ENCODE measurements at regions of chr17 and their contacts with region 1.

Region 1: DNA sequence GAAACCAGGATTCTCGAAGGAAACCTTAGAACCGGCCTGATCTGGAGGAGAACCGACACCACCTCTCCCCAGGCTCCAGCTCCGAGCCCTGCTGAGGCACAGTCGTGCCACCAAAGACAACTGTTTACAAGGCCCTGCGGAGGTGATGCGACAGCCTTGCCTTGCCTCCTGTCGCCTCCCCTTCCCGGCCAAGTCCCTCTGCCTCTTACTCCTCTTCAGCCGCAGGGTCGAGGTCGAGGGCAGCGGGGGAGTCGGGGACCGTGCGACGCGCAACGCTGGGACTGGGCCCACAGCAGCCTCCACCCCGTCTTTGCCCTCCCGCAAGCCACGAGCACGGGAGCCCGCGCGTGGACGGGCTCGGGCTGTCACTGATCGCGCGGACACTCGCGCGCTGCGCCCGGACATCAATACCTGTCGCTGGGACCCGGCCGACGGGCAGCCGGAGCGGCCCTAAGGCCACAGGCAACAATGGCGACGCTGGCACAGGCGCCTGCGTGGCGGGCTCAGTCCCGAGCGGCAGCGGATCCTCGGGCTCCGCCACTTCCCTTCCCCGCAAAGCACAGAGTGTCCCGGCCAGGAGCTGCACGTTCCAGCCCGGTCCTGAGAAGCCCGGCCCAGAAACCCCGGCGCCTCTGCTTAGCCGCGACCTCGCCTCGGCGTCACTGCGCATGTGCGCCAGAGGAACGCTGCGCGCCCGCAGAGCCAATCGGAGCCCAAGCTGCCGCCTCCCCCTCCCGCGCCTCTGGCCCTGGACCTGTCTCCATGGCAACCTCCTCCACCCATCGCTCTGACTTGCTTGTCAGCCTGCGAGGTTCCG is at the start of gene ZNF287:
- DNase-seq: peak; percentile 96
- ATAC-seq: peak; percentile 99
- H3K4me3 Mint-ChIP-seq: peak within 1 kb of the TSS; percentile 79
- H3K27ac Mint-ChIP-seq: no peak within 1 kb of the TSS
- H3K4me1 Mint-ChIP-seq: peaks cover 14% of the 10 kb centered on the region
- H3K27me3 Mint-ChIP-seq: peaks cover 3% of the 10 kb centered on the region
- total RNA-seq, gene ZNF287: 9.4 TPM

Region 2: GRCh38 chr17:16653209-16654041 is 84.7 kb after region 1 on chr17 and contains the start of gene ZNF624:
- CTCF ChIA-PET with region 1: no interaction called
- POLR2A ChIA-PET with region 1: no interaction called
- intact Hi-C with region 1: loop called in 1 of 2 experiments (anchors 1 kb)
- DNase-seq: peak; percentile 94
- ATAC-seq: peak; percentile 97
- H3K4me3 Mint-ChIP-seq: peak within 1 kb of the TSS; percentile 81
- H3K27ac Mint-ChIP-seq: peak within 1 kb of the TSS; percentile 73
- H3K4me1 Mint-ChIP-seq: peaks cover 18% of the 10 kb centered on the region
- H3K27me3 Mint-ChIP-seq: peaks cover 5% of the 10 kb centered on the region
- total RNA-seq, gene ZNF624: 3.7 to 4.4 TPM